Heart right ventricle (tissue), 16 donors: ENCODE measurements at regions of chr17 and their contacts with region 1.

Region 1: DNA sequence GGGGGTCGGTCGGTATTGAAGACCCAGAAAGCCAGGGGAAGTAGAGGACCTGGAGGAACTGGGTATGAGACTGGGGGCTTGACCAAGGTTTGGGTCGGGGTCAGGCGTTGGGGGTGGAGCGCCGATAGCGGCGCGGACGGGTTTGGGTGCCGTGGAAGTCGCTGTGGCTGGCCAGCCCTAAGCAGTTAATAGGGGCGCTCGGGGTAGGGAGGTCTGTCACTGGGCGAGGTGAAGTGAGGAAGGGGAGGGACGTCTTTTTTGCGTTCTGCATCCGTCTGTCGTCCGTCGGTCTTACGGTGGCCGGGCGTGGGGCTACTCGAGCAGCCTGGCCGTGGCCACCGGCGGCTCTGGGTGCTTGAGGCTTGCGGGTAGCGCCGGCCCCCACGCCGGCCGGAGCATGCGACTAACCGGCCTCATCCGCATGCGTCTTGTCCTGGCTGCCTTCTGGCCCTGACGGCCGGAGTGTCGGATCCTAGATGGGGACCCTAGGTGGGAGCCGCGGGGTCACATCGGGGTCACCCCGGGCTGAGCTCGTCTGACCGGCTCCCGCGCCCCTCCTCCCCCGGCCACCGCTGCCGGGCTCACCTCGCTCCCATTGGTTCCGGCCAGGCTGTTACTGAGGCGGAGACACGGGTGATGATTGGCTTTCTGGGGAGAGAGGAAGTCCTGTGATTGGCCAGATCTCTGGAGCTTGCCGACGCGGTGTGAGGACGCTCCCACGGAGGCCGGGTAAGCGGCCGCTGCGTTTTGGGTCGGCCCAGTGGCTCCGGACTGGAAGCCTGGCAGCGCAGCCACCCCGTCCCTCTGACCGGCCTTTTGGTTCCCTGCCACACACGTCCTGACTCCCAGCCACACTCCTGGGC is 10.3 kb upstream of the TMEM88 start:
- DNase-seq: peak; percentile 88 to 94
- ATAC-seq: peak; percentile 57 to 80 (median 71)
- H3K4me3 ChIP-seq: peak overlapping the region; percentile 68 to 90 (median 76)
- H3K27ac ChIP-seq: peak overlapping the region; percentile 90 to 100 (median 97)
- H3K4me1 ChIP-seq: peaks cover 12 to 48% (median 37%) of the 10 kb centered on the region in 9 donors
- H3K27me3 ChIP-seq: no peaks in the 10 kb centered on the region
- CTCF ChIP-seq: no peak

Region 2: DNA sequence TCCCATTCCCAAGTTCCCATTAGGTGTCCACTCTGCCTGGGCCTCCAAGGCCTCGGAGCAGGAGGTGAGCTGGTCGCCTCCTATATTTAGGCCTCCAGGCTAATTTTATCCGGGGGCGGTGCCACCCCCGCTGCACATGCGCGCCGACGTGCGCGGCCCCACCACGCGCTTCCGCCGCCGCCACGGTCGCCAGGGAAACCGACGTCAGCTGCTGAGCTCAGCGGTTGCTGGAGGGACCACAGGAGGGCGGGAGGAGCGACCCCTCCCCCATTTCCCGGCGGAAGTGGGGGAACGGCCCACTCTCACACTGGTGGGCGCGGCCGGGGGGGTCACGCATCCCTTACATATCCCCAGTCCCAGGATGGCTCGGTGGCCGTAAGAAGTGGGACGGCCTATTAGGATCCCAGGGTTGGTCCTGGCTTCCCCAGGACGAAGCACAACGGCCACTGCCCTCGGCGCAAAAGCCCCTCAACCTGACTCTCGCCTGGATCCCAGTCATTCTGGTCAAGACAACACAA is 306.7 kb after region 1 on chr17:
- intact Hi-C with region 1: loop called in 3 of 10 experiments (anchors 5 to 10 kb)
- DNase-seq: peak; percentile 94 to 96
- ATAC-seq: peak; percentile 44 to 62 (median 52)
- H3K4me3 ChIP-seq: peak overlapping the region; percentile 53 to 96 (median 78)
- H3K27ac ChIP-seq: peak overlapping the region; percentile 97 to 100 (median 100)
- H3K4me1 ChIP-seq: peaks cover 28 to 76% (median 53%) of the 10 kb centered on the region in 9 donors
- H3K27me3 ChIP-seq: no peaks in the 10 kb centered on the region
- CTCF ChIP-seq: no peak

Region 3: DNA sequence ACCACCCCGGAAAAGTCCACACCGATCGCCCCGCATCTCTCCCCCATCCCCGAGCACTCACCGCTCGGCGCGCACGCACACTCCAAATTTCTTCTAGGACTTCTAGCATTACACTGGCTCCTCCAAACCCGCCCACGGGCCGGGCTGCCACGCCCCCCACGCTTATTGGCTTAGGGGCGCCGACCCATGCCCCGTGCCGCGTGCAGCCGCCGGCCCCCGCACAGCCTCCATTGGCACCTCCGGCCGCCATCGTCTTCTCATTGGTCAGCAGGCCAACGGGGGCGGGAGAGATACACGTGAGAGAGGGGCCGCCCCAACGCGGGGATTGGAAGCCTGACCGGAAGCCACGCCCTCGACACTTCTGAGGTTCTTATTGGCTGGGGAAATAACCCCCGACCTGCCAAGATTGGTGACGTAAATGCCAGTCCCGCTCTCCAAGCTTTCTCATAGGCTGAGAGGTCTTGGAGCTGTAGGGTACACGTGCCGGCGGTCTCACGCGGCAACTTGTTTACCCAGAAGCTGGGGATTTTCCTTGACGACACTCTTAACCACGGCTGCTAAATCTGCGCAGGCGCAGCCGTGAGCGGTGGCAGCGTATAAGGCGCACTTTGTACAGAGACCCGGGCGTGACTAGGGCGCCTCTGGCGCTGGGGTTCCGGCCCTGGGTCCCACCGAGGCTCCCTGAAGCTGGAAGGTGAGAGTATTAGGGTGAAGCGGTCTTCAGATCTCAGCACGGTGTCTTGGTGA is 311.9 kb after region 1 on chr17:
- intact Hi-C with region 1: loop called in 3 of 10 experiments (anchors 5 to 10 kb)
- DNase-seq: peak; percentile 100
- ATAC-seq: peak; percentile 65 to 75 (median 68)
- H3K4me3 ChIP-seq: peak overlapping the region; percentile 66 to 91 (median 81)
- H3K27ac ChIP-seq: peak overlapping the region; percentile 97 to 100 (median 100)
- H3K4me1 ChIP-seq: peaks cover 19 to 91% (median 51%) of the 10 kb centered on the region in 9 donors
- H3K27me3 ChIP-seq: no peaks in the 10 kb centered on the region
- CTCF ChIP-seq: peak in 4 of 9 donors; percentile 12 to 42 (median 28)